IMR-90 (cell line): ENCODE measurements at regions of chr5 and their contacts with region 1.

Region 1: GRCh38 chr5:163453705-163454104 is 6.2 kb downstream of the NUDCD2 start:
- DNase-seq: peak; percentile 53
- ATAC-seq: peak; percentile 44; the same call in 1 of the 2 replicates
- H3K4me3 ChIP-seq: no peak overlapping the region
- H3K27ac ChIP-seq: no peak overlapping the region
- H3K4me1 ChIP-seq: no peaks in the 10 kb centered on the region
- H3K27me3 ChIP-seq: no peaks in the 10 kb centered on the region
- CTCF ChIP-seq: no peak
- POLR2A ChIP-seq: no peak
- RAD21 ChIP-seq: no peak

Region 2: DNA sequence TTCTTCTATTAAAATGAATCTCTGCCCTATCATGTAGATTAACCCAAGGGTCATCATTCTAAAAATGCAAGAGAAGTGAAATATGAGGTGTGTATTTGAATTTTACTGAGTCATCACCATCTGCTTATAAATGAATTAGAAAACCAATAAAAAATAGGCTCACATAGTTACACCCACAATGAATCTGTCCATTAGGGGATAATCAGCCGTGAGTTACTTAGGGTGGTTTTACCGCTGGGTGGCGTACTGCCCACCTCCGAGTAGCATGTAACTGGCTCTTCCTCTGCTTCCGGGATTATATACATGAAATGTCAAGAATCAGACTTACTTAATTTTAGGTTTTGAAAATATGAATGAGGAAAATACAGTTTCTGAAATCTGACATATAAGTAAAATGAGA is 349.2 kb before region 1 on chr5:
- CTCF ChIA-PET with region 1: no interaction called
- POLR2A ChIA-PET with region 1: no interaction called
- dilution Hi-C with region 1: no loop called
- in situ Hi-C with region 1: no loop called
- intact Hi-C with region 1: no loop called
- DNase-seq: no peak
- ATAC-seq: no peak
- H3K4me3 ChIP-seq: no peak overlapping the region
- H3K27ac ChIP-seq: no peak overlapping the region
- H3K4me1 ChIP-seq: no peaks in the 10 kb centered on the region
- H3K27me3 ChIP-seq: no peaks in the 10 kb centered on the region
- CTCF ChIP-seq: no peak
- POLR2A ChIP-seq: no peak
- RAD21 ChIP-seq: no peak

Region 3: GRCh38 chr5:163440954-163441353 is 12.8 kb before region 1 on chr5:
- CTCF ChIA-PET with region 1: interaction called, 3 read pairs
- POLR2A ChIA-PET with region 1: no interaction called
- dilution Hi-C with region 1: no loop called
- in situ Hi-C with region 1: no loop called
- intact Hi-C with region 1: loop called (anchors 1 kb)
- DNase-seq: no peak
- ATAC-seq: no peak
- H3K4me3 ChIP-seq: no peak overlapping the region
- H3K27ac ChIP-seq: no peak overlapping the region
- H3K4me1 ChIP-seq: no peaks in the 10 kb centered on the region
- H3K27me3 ChIP-seq: no peaks in the 10 kb centered on the region
- CTCF ChIP-seq: no peak
- POLR2A ChIP-seq: no peak
- RAD21 ChIP-seq: no peak